Common myeloid progenitor, CD34-positive (primary cell): ENCODE measurements at regions of chr1 and their contacts with region 1.

Region 1: GRCh38 chr1:160193091-160193819 is 2.9 kb downstream of the CASQ1 start:
- DNase-seq: peak; percentile 67 to 80 (median 68)
- H3K4me3 ChIP-seq: no peak overlapping the region
- H3K27ac ChIP-seq: no peak overlapping the region
- H3K4me1 ChIP-seq: peaks cover 0 to 3% (median 0%) of the 10 kb centered on the region in 4 experiments
- H3K27me3 ChIP-seq: peaks cover 0 to 2% (median 0%) of the 10 kb centered on the region in 5 experiments

Region 2: DNA sequence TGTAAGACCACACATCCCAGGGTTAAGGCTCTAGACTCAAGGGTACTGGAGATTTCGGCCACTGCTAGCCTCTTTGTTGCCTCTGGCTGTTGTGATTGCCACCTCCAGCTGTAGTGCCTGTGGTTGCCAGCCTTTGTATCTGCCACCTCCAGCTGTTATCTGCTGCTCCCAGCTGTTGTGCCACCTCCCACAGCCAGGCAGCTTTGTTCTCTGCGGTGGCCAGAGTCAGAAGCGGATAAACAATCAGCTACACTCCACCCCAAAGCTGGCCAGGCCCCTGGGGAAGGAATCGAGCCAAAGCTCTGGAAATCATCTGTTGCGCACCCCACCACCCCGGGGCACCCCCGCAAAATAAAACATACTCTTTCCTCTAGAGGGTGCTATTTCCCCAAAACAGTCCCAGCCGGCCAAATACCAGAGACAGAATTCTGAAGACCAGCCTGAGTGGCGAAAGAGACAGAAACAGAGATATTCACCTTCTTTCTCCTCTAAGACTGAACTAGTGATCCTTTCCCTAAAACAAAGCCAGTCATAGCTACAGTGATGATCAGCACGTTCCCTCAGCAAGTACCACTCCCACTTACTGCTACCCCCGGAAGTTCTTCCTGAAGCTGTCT is 146.7 kb before region 1 on chr1:
- CTCF ChIA-PET with region 1: no interaction called
- POLR2A ChIA-PET with region 1: no interaction called
- DNase-seq: peak; percentile 91 to 98 (median 96)
- H3K4me3 ChIP-seq: peak overlapping the region in 5 of 7 experiments; percentile 8 to 70 (median 33)
- H3K27ac ChIP-seq: no peak overlapping the region
- H3K4me1 ChIP-seq: peaks cover 5 to 25% (median 15%) of the 10 kb centered on the region in 4 experiments
- H3K27me3 ChIP-seq: peaks cover 0 to 7% (median 0%) of the 10 kb centered on the region in 5 experiments

Region 3: GRCh38 chr1:160078512-160079195 is 114.6 kb before region 1 on chr1:
- CTCF ChIA-PET with region 1: no interaction called
- POLR2A ChIA-PET with region 1: no interaction called
- DNase-seq: peak; percentile 47 to 65 (median 60)
- H3K4me3 ChIP-seq: no peak overlapping the region
- H3K27ac ChIP-seq: no peak overlapping the region
- H3K4me1 ChIP-seq: peaks cover 0 to 3% (median under 1%) of the 10 kb centered on the region in 4 experiments
- H3K27me3 ChIP-seq: peaks cover 9 to 50% (median 38%) of the 10 kb centered on the region in 5 experiments

Region 4: DNA sequence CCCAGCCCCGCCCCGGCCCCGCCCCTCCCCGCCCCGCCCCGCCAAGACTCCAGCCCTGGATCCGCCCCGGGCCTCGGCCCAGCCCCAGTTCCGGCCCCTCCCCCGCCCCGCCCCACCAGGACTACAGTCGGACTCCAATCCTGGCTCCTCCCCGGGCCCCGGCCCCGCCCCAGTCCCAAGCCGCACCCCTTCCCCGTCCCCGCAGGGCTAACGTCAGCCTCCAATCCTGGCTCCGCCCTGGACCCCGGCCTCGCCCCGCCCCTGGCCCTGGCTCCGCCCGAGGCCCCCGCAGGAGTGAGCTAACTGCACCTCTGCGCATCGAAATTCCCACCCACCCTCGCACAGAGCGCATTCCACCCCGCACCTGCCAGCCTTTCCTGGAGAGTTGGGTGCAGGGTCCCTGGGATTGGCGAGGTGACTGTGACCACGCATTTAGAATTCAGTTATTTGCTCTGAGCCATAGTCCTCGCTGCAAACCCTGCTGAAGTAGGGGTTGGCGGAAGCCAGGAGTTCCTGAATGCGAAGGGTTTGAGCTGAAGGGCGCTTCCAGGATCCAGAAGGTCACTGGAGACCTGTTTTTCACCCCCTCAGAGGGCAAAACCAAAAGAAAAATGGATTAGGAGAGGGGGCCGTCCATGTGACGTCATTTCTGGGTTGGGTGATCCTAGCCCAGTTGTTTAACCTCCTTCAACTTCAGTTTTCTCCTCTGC is 94.2 kb before region 1 on chr1:
- CTCF ChIA-PET with region 1: interaction called, 31 read pairs
- POLR2A ChIA-PET with region 1: no interaction called
- DNase-seq: peak; percentile 92 to 96 (median 95)
- H3K4me3 ChIP-seq: peak overlapping the region; percentile 37 to 89 (median 71)
- H3K27ac ChIP-seq: peak overlapping the region; percentile 41 to 87
- H3K4me1 ChIP-seq: peaks cover 0 to 48% (median 35%) of the 10 kb centered on the region in 4 experiments
- H3K27me3 ChIP-seq: no peaks in the 10 kb centered on the region

Region 5: DNA sequence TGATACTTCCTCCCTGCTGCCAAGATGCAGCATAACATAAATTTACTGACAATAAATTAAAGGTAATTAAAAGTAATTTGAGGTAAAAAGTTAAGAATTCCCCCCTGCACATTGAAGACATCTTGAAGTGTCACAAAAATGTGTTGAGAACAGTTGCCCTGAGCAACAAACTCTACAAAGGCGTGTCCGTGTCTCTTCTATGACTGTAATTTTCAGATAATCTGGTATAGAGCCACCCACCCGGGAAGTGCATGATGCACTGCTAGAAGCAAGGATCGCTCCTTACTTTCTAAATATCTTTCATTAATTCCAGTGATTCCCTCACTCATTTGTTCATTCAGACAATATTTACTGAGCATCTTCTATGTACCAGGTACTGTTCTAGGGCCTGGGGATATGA is 13.9 kb before region 1 on chr1:
- CTCF ChIA-PET with region 1: interaction called, 10 read pairs
- POLR2A ChIA-PET with region 1: no interaction called
- DNase-seq: no peak
- H3K4me3 ChIP-seq: no peak overlapping the region
- H3K27ac ChIP-seq: no peak overlapping the region
- H3K4me1 ChIP-seq: no peaks in the 10 kb centered on the region
- H3K27me3 ChIP-seq: peaks cover 0 to 3% (median 0%) of the 10 kb centered on the region in 5 experiments

Region 6: DNA sequence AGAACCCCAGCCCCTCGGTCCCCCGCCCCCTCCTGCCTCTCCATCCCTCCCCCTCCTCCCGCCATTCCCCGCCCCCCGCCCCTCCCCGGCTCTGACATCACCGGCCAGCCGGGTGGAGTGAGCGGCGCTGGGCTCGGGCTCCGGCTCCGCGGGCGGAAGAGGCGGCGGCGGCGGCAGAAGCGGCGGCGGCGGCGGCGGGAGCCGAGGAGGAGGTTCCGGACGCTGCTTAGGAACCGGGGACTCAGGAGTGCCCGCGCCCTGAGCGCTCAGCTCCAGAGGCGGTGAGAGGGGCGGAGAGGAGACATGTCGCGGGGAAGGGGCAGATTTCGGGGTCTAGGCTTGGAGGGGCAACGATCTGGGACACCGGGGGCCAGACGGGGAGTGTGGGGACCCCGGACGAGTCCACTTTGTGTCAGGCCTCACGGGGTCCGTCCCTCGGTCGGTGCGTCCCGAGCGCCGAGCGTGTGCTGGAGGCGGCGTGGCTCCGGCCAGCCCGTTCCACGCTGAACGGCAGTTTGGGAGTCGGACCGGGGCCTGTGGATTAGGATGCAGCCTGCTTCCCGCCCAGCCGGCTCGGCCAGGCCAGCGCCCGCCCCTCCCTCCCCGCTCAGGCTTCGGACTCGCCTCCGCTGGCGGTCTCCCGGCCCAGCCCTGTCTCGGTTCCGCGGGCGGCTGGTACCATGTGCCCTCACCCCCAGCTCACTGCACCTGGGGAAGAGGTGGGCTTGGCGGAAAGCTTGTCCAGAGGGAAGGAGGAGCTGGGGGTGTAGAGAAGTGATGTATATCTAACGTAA is 12.2 kb after region 1 on chr1 and contains the start of gene PEA15:
- CTCF ChIA-PET with region 1: interaction called, 95 read pairs
- POLR2A ChIA-PET with region 1: interaction called, 3 read pairs
- DNase-seq: peak; percentile 53 to 73 (median 62)
- H3K4me3 ChIP-seq: peak within 1 kb of the TSS; percentile 60 to 93 (median 87)
- H3K27ac ChIP-seq: peak within 1 kb of the TSS in 1 of 2 experiments; percentile 77
- H3K4me1 ChIP-seq: peaks cover 7 to 27% (median 24%) of the 10 kb centered on the region in 4 experiments
- H3K27me3 ChIP-seq: no peaks in the 10 kb centered on the region

Region 7: DNA sequence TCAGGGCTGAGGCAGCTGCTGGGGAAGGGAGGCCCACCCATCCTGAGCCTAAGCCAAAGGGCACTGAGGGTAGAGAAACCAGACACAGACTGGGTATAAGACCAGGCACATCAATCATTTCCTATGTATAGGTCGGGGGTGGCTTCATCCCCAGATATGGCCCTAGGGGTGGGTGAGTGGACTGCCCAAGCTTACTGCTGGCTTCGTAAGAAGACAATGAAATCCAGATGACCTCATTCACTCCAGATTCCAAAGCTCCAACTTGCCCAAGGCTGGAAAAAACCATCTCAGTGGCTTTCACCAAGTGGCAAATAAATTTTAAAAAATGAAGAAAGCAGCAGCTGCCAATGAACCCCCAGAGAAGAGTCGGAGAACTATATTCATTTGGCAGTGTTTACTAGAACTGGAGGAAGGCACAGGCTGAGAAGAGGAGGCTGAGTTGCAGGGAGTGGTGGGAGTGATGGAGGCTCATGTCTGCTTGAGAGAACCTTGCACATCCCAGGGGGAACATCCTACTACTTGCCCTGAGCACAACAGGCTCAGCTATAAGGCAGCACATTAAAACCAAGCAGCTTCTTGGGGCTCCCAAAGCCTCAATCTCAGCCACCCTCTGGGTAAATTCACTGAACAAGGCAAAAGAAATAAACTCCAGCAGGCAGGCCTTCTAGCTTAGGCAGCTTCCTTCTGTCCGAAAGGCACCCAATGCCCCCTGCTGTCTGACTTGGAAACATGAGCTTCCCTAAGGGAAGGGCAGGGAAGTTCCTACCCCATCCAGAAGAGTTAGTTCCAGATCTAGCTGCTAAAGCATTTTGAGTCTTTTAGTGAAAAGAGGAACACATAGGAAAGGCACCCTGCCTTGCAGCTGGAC is 26.0 kb after region 1 on chr1:
- CTCF ChIA-PET with region 1: interaction called, 51 read pairs
- POLR2A ChIA-PET with region 1: no interaction called
- DNase-seq: peak; percentile 15 to 40 (median 34)
- H3K4me3 ChIP-seq: no peak overlapping the region
- H3K27ac ChIP-seq: no peak overlapping the region
- H3K4me1 ChIP-seq: no peaks in the 10 kb centered on the region
- H3K27me3 ChIP-seq: no peaks in the 10 kb centered on the region

Region 8: GRCh38 chr1:160226623-160227022 is 33.4 kb after region 1 on chr1:
- CTCF ChIA-PET with region 1: interaction called, 51 read pairs
- POLR2A ChIA-PET with region 1: no interaction called
- DNase-seq: no peak
- H3K4me3 ChIP-seq: no peak overlapping the region
- H3K27ac ChIP-seq: no peak overlapping the region
- H3K4me1 ChIP-seq: no peaks in the 10 kb centered on the region
- H3K27me3 ChIP-seq: no peaks in the 10 kb centered on the region

Region 9: DNA sequence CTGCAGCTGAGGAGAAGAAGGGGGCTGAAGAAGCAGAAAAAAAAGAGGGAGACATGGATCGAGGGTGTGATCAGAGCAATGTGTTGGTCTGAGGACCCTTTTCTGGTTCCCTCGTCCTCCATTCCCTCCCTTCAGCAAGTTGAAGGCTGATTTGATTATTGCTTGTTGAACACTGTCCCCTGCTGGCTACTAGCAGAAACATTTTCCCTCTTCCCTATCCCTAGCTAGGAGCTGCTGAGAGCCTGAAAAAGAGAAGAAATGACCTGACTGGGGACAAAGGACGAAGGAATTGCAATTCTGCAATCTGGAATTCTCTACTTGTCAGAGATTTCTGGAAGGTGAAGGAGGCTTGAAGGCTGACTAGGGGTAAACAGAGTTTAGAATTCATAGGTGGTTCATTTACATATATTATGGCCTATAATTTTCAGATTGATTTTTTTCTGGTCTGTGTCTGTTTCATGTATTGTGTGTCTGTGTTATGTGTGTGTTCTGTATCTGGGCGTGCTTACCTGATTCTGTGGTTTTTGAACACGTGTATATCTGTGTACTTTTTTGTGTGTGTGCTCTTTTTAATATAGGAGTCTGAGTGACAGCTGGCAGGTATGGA is 183.4 kb after region 1 on chr1:
- CTCF ChIA-PET with region 1: interaction called, 10 read pairs
- POLR2A ChIA-PET with region 1: no interaction called
- DNase-seq: peak; percentile 76 to 87 (median 85)
- H3K4me3 ChIP-seq: peak overlapping the region in 3 of 7 experiments; percentile 4 to 49 (median 43)
- H3K27ac ChIP-seq: no peak overlapping the region
- H3K4me1 ChIP-seq: peaks cover 5 to 24% (median 20%) of the 10 kb centered on the region in 4 experiments
- H3K27me3 ChIP-seq: no peaks in the 10 kb centered on the region